Prostate gland (tissue), 2 donors: ENCODE measurements at regions of chrX and their contacts with region 1.

Region 1: DNA sequence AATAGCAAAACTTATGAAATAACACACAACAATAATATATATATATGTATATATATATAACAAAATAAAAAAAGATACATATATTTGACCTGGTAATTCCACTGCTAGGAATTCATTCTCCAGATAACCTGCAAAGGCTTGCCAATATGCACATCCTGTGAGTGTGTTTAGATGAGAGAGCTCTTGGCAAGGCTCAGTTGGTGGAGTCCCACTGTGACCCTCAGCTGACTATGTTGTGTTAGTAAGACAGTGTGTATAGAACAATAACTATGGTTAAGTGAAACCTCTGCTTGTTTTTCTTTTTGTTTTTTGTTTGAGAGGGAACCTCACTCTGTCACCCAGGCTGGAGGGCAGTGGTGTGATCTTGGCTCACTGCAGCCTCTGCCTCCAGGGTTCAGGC is 39.5 kb upstream of the RBMX start:
- DNase-seq: no peak
- H3K4me3 ChIP-seq: no peak overlapping the region
- H3K27ac ChIP-seq: no peak overlapping the region
- H3K4me1 ChIP-seq: no peaks in the 10 kb centered on the region
- H3K27me3 ChIP-seq: no peaks in the 10 kb centered on the region
- CTCF ChIP-seq: no peak
- POLR2A ChIP-seq: no peak

Region 2: GRCh38 chrX:136711147-136711546 is 208.9 kb before region 1 on chrX:
- intact Hi-C with region 1: loop called (anchors 5 kb)
- DNase-seq: peak; percentile 14
- H3K4me3 ChIP-seq: no peak overlapping the region
- H3K27ac ChIP-seq: no peak overlapping the region
- H3K4me1 ChIP-seq: no peaks in the 10 kb centered on the region
- H3K27me3 ChIP-seq: no peaks in the 10 kb centered on the region
- CTCF ChIP-seq: peak in 3 of 4 experiments; percentile 18 to 46 (median 20)
- POLR2A ChIP-seq: no peak

Region 3: GRCh38 chrX:136870064-136870463 is 49.9 kb before region 1 on chrX:
- intact Hi-C with region 1: no loop called
- DNase-seq: no peak
- H3K4me3 ChIP-seq: no peak overlapping the region
- H3K27ac ChIP-seq: no peak overlapping the region
- H3K4me1 ChIP-seq: no peaks in the 10 kb centered on the region
- H3K27me3 ChIP-seq: no peaks in the 10 kb centered on the region
- CTCF ChIP-seq: no peak
- POLR2A ChIP-seq: no peak

Region 4: DNA sequence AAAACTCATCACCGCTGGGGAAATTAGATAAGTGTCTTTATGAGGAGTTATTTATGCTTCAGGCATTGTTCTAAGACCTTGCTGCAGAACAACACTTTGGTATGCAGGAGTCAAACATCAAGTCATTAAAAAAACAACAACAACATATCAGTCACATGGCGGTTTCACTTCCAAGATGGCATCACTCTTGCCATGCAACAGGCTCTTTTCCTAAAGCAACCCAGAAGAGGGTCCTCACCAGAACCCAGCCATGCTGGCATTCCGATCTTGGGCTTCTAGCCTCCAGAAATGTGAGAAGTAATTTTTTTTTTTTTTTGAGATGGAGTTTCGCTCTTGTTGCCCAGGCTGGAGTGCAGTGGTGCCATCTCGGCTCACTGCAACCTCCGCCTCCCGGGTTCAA is 30.7 kb before region 1 on chrX:
- intact Hi-C with region 1: no loop called
- DNase-seq: no peak
- H3K4me3 ChIP-seq: no peak overlapping the region
- H3K27ac ChIP-seq: no peak overlapping the region
- H3K4me1 ChIP-seq: no peaks in the 10 kb centered on the region
- H3K27me3 ChIP-seq: no peaks in the 10 kb centered on the region
- CTCF ChIP-seq: no peak
- POLR2A ChIP-seq: no peak

Region 5: GRCh38 chrX:136975684-136976470 is 55.9 kb after region 1 on chrX:
- intact Hi-C with region 1: no loop called
- DNase-seq: no peak
- H3K4me3 ChIP-seq: no peak overlapping the region
- H3K27ac ChIP-seq: no peak overlapping the region
- H3K4me1 ChIP-seq: no peaks in the 10 kb centered on the region
- H3K27me3 ChIP-seq: no peaks in the 10 kb centered on the region
- CTCF ChIP-seq: no peak
- POLR2A ChIP-seq: no peak

Region 6: DNA sequence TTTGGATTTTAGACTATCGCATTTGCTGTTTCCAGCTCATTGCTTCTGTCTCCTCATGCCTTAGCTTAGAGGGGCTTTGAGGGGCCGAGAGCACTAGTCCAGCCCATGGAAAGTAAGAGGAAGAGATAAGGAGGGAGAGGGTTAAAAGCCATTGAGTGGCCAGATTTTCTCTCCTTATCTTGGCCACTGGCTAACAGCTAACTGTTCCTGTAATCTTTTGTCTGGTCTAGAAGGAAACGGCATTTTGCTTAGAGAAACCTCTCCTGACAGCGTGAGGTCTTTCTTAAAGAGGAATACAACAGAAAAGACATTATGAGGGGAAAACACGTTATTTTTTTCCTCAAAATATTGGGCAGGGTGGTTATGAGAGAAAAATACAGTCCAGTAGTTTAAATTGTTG is 105.9 kb after region 1 on chrX:
- intact Hi-C with region 1: no loop called
- DNase-seq: no peak
- H3K4me3 ChIP-seq: no peak overlapping the region
- H3K27ac ChIP-seq: no peak overlapping the region
- H3K4me1 ChIP-seq: no peaks in the 10 kb centered on the region
- H3K27me3 ChIP-seq: no peaks in the 10 kb centered on the region
- CTCF ChIP-seq: no peak
- POLR2A ChIP-seq: no peak